ENCODE measurements at regions of chr20 and their contacts with region 1.

Region 1: DNA sequence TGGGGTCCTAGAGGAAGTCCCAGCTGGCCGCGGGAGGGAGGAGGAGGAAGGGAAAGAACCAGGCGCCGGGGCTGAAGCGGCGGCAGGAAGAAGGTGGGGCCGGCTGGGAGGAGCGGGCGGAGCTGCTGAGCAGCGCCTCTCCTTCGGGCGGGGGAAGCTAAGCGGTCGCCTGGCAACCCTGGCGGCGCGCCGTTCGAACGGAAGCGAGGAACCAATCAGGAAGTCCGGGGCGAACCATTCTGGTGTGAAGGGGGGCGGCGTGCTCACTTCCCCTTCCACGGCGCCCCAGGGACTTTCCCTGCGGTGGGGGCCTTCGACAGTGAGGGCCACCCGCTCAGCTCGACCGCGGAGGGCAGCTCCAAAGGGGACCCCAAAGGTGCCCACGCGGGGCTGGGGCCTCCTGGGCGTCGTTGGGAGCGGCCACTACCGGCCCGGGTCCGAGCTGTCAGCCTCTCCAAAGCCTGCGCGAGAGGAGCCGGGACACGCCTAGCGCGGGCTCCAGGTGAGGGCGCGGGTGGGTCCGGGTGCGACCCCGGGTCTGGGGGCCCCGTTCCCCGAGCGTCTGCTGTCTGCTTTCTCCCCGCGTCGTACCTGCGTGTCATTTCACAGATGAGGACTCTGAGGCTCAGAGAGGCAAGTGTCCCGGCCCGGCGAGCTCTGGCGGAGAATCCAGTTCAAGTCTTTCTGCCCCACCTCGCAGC is at the start of gene FAM110A:
- DNase-seq: peak; percentile 89 to 99 (median 96)
- ATAC-seq: peak; percentile 96
- H3K4me3 ChIP-seq: peak within 1 kb of the TSS; percentile 90 to 96
- H3K4me3 Mint-ChIP-seq: peak within 1 kb of the TSS; percentile 91
- H3K27ac ChIP-seq: peak within 1 kb of the TSS; percentile 85 to 96
- H3K27ac Mint-ChIP-seq: peak within 1 kb of the TSS; percentile 82
- H3K4me1 ChIP-seq: peaks cover 27% of the 10 kb centered on the region
- H3K4me1 Mint-ChIP-seq: peaks cover 43% of the 10 kb centered on the region
- H3K27me3 ChIP-seq: no peaks in the 10 kb centered on the region
- H3K27me3 Mint-ChIP-seq: no peaks in the 10 kb centered on the region
- CTCF ChIP-seq: no peak
- total RNA-seq, gene FAM110A: 6.7 to 7.7 TPM

Region 2: DNA sequence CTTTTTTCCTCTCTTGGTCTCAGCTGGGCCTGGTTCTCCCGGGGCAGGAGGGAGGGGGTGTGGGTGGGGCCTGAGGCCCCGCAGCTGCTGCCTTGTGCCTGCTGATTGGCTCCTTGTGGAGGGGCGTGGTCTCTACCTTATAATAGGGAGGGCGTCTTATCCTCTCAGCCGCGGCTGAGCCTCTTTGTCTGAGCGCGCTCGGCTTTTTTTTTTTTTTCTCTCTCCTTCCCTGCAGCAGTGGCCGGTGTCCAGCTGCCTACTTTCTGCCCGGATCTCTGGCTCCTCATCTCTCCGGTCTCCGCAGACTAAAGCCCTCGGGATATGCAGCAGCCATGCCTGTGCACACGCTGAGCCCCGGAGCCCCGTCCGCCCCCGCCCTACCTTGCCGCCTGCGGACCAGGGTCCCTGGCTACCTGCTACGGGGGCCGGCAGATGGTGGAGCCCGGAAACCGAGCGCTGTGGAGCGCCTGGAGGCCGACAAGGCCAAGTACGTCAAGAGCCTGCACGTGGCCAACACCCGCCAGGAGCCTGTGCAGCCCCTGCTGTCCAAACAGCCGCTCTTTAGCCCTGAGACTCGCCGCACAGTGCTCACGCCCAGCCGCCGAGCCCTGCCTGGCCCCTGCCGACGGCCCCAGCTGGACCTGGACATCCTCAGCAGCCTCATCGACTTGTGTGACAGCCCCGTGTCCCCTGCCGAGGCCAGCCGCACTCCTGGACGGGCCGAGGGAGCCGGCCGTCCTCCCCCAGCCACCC is 11.0 kb after region 1 on chr20:
- CTCF ChIA-PET with region 1: interaction called, 12 read pairs
- POLR2A ChIA-PET with region 1: interaction called, 45 read pairs
- intact Hi-C with region 1: loop called (anchors 1 kb)
- DNase-seq: peak; percentile 81 to 97 (median 90)
- ATAC-seq: peak; percentile 94
- H3K4me3 ChIP-seq: peak overlapping the region; percentile 65 to 71
- H3K4me3 Mint-ChIP-seq: peak overlapping the region; percentile 94
- H3K27ac ChIP-seq: peak overlapping the region; percentile 26 to 48
- H3K27ac Mint-ChIP-seq: peak overlapping the region; percentile 84
- H3K4me1 ChIP-seq: peaks cover 52% of the 10 kb centered on the region
- H3K4me1 Mint-ChIP-seq: peaks cover 54% of the 10 kb centered on the region
- H3K27me3 ChIP-seq: no peaks in the 10 kb centered on the region
- H3K27me3 Mint-ChIP-seq: no peaks in the 10 kb centered on the region
- CTCF ChIP-seq: no peak

Region 3: DNA sequence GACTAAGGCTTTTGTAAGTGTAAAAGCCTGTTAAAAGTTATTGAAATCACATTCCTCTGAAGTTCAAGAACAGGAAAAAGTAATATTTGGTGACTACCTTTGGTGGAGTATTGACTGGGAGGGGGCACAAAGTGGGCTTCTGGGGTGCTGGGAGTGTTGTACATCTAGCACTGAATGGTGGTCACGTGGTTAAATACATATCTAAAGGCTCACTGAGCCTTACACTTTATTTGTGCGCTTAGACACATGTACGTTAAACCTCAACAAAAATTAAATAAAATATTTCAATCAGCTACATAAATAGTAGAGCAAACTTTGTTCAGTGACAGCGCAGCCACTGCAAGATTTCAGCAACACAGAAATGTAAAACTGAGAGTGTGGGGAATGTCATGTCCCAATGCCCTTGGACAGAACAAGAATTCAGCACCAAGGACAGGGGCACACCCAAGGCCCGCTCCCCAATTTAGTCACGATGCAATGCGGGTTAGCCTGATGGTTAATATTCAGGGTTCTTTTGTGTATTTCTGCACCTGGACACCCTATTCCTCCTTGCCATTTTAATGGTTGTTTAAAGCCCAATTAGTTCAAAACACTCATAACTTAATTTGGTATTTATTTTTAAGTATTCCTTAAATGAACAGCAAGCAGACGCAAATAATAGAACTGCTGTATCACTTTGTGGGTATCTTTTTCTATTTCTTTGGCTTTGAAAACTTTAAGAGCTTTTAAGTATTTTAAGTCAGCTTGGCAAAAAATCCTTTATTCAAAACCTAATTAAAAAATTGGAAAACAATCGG is 45.1 kb after region 1 on chr20:
- CTCF ChIA-PET with region 1: no interaction called
- POLR2A ChIA-PET with region 1: no interaction called
- intact Hi-C with region 1: no loop called
- DNase-seq: peak in 2 of 9 experiments; percentile 22 to 25
- ATAC-seq: no peak
- H3K4me3 ChIP-seq: no peak overlapping the region
- H3K4me3 Mint-ChIP-seq: no peak overlapping the region
- H3K27ac ChIP-seq: no peak overlapping the region
- H3K27ac Mint-ChIP-seq: no peak overlapping the region
- H3K4me1 ChIP-seq: no peaks in the 10 kb centered on the region
- H3K4me1 Mint-ChIP-seq: peaks cover 3% of the 10 kb centered on the region
- H3K27me3 ChIP-seq: no peaks in the 10 kb centered on the region
- H3K27me3 Mint-ChIP-seq: peaks cover 7% of the 10 kb centered on the region
- CTCF ChIP-seq: no peak

Region 4: DNA sequence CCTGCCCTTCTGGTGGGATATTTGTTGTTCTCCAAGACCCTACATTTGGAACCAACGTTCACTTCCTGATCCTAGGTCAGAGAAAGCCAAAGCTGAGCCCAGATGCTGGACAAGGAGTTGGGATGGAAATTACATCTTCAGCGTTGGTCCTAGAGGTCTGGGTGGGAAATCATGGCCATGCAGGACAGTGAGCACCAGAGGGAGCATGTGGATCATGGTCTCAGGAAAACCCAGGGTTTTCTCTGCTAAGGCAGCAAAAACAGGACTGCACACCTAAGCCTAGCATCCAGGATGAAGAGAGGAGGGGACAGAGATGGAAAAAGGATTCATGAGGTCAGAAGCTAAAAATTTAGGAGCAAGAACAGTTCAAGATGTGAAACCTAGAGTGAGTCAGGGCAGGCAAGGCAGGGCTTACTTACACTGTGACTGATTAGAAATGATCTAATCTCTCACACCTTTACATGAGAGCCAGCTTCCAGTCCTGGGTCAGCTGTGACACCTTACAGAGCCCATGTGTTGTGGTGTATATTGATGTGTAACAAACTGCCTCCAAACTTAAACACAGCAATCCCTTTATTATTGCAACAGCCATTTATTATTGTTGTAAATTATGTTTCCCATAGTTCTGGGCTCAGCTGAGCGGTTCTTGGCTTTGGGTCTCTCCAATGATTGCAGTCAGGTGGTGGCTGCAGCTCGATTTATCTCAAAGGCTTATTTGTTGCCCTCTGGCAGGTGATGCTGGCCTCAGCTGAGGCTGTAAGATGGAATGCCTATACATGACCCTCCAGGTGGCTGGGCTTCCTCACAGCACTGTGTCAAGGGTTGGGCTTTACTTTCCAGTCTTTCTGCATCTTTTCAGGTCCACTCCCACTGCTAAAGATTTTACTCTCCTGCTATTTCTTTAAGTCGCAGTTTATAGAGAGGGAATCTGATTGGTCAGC is 376.1 kb after region 1 on chr20:
- CTCF ChIA-PET with region 1: no interaction called
- POLR2A ChIA-PET with region 1: no interaction called
- intact Hi-C with region 1: no loop called
- DNase-seq: no peak
- ATAC-seq: no peak
- H3K4me3 ChIP-seq: no peak overlapping the region
- H3K4me3 Mint-ChIP-seq: no peak overlapping the region
- H3K27ac ChIP-seq: no peak overlapping the region
- H3K27ac Mint-ChIP-seq: no peak overlapping the region
- H3K4me1 ChIP-seq: no peaks in the 10 kb centered on the region
- H3K4me1 Mint-ChIP-seq: peaks cover 6% of the 10 kb centered on the region
- H3K27me3 ChIP-seq: no peaks in the 10 kb centered on the region
- H3K27me3 Mint-ChIP-seq: peaks cover 9% of the 10 kb centered on the region
- CTCF ChIP-seq: no peak

Region 5: GRCh38 chr20:1225783-1226654 is 392.4 kb after region 1 on chr20 and contains the start of gene RAD21L1:
- CTCF ChIA-PET with region 1: no interaction called
- POLR2A ChIA-PET with region 1: no interaction called
- intact Hi-C with region 1: loop called in 1 of 2 experiments (anchors 1 kb)
- DNase-seq: peak; percentile 63 to 85 (median 80)
- ATAC-seq: peak; percentile 93
- H3K4me3 ChIP-seq: peak within 1 kb of the TSS; percentile 64 to 82
- H3K4me3 Mint-ChIP-seq: peak within 1 kb of the TSS; percentile 87
- H3K27ac ChIP-seq: peak within 1 kb of the TSS in 1 of 2 experiments; percentile 44
- H3K27ac Mint-ChIP-seq: no peak within 1 kb of the TSS
- H3K4me1 ChIP-seq: peaks cover 9% of the 10 kb centered on the region
- H3K4me1 Mint-ChIP-seq: peaks cover 18% of the 10 kb centered on the region
- H3K27me3 ChIP-seq: peaks cover 0 to 8% of the 10 kb centered on the region in 2 experiments
- H3K27me3 Mint-ChIP-seq: peaks cover 13% of the 10 kb centered on the region
- CTCF ChIP-seq: no peak
- total RNA-seq, gene RAD21L1: not detected

Region 6: GRCh38 chr20:1325173-1326030 is 491.8 kb after region 1 on chr20:
- CTCF ChIA-PET with region 1: no interaction called
- POLR2A ChIA-PET with region 1: no interaction called
- intact Hi-C with region 1: loop called in 1 of 2 experiments (anchors 10 kb)
- DNase-seq: peak; percentile 98 to 100 (median 99)
- ATAC-seq: peak; percentile 86
- H3K4me3 ChIP-seq: peak overlapping the region; percentile 81 to 97
- H3K4me3 Mint-ChIP-seq: no peak overlapping the region
- H3K27ac ChIP-seq: peak overlapping the region; percentile 94 to 99
- H3K27ac Mint-ChIP-seq: no peak overlapping the region
- H3K4me1 ChIP-seq: peaks cover 38% of the 10 kb centered on the region
- H3K4me1 Mint-ChIP-seq: peaks cover 20% of the 10 kb centered on the region
- H3K27me3 ChIP-seq: no peaks in the 10 kb centered on the region
- H3K27me3 Mint-ChIP-seq: no peaks in the 10 kb centered on the region
- CTCF ChIP-seq: no peak

Region 7: DNA sequence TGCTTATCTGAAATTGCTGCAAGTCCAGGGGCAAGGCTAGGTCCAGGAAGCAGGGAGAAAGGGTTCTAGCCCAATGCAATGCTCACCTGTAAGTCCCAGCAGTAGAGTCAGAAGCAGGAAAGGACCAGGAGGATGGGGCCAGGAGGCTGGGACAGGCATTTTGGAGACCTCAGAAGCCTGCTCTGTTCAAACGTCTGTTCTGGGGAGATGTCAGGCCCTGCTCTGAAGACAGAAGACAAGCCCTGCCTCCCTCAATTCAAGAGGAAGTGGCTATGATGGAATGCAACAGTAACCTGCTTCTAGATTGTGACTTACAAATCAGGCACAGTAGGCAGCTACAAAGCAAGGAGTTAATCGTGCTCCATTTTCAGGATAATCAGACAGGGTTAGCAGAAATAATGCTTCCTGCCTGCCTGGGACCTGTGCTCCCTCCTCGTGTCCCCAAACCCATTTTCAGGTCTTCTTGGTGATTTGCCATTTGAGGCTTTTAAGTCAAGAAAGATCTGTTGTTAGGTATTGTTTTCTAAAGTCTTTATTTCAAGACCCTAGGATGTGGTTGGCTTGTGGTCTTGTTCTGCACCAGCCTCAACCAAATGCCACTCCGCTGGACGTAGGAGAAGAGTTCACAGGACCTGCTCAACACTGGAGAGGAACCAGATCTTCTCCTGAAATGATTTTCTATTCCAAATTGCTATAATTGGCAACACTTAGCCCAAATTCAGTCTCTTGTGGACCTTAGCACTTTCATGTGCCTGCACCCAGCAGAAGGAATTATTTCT is 824.1 kb after region 1 on chr20 and contains the start of gene SIRPG:
- CTCF ChIA-PET with region 1: no interaction called
- POLR2A ChIA-PET with region 1: no interaction called
- intact Hi-C with region 1: loop called in 1 of 2 experiments (anchors 10 kb)
- DNase-seq: peak in 3 of 9 experiments; percentile 31 to 60 (median 40)
- ATAC-seq: peak; percentile 51
- H3K4me3 ChIP-seq: peak within 1 kb of the TSS; percentile 52 to 59
- H3K4me3 Mint-ChIP-seq: peak within 1 kb of the TSS; percentile 89
- H3K27ac ChIP-seq: peak within 1 kb of the TSS; percentile 39 to 68
- H3K27ac Mint-ChIP-seq: peak within 1 kb of the TSS; percentile 96
- H3K4me1 ChIP-seq: peaks cover 87% of the 10 kb centered on the region
- H3K4me1 Mint-ChIP-seq: peaks cover 88% of the 10 kb centered on the region
- H3K27me3 ChIP-seq: no peaks in the 10 kb centered on the region
- H3K27me3 Mint-ChIP-seq: no peaks in the 10 kb centered on the region
- CTCF ChIP-seq: no peak
- total RNA-seq, gene SIRPG: 17.1 to 17.6 TPM

Measured in CD8-positive, alpha-beta T cell (primary cell).